Esophagus muscularis mucosa (tissue), 4 donors: ENCODE measurements at regions of chr4 and their contacts with region 1.

Region 1: DNA sequence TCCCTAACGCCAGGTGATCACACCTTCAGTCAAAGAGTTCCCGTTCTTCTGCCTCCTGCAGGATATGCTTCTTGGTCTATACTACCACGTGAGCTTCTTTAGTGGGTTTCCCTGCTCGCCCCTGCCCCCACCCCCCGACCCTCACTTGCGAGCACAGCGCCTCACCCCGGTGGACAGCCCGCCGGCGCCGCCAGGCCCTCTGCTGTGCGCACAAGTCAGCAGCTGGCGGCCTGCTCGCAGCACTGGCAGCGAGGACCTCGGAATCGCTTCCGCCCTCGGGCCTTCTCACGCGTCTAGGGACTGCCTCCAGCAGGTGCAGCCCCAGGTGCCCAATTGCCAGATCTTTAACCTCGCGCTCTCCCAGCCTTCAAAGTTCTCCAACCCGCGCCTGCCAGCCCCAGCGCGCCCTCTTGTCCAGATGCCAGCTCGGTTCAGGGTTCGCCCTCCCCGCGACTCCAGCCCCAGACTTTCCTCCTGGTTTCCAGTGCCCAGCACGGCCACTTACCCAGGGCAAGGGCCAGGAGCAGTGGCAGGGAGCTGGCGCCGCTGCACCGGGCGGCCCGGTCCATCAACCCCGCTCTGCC is 474 bp downstream of the BTC start:
- DNase-seq: no peak
- H3K4me3 ChIP-seq: peak overlapping the region; percentile 63 to 83 (median 69)
- H3K27ac ChIP-seq: peak overlapping the region; percentile 85 to 94 (median 90)
- H3K4me1 ChIP-seq: peaks cover 10 to 46% (median 35%) of the 10 kb centered on the region in 4 donors
- H3K27me3 ChIP-seq: no peaks in the 10 kb centered on the region
- CTCF ChIP-seq: peak; percentile 34 to 57 (median 47)
- EP300 ChIP-seq: no peak
- POLR2A ChIP-seq: no peak

Region 2: DNA sequence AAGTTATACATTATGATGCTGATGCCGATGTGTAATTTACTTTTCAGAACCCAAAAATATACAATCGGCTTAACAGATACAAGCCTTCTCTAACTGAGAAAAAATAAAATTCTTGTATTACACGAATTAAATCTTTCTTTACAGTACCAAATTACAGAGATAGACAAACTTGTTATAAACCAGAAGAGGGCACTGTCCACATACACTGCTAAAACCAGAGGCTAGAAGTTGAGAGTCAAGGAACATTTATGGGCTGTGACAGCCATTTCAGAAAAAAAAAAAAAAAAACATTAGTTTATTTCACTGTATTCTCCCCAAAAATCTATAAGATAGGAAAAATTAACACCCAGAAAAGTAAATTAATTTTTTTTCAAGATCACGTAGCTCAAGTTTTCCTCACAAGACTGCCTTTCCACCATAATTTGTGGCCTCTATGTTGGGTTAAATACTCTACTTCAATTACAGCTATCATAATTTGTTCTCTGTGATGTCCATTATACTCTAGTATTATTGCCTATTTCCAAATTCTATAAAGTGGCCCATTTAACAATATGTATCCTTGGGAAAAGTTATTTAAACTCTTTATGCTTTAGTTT is 416.9 kb before region 1 on chr4:
- intact Hi-C with region 1: loop called (anchors 5 kb)
- DNase-seq: no peak
- H3K4me3 ChIP-seq: no peak overlapping the region
- H3K27ac ChIP-seq: peak overlapping the region in 2 of 4 donors; percentile 38 to 41
- H3K4me1 ChIP-seq: peaks cover 0 to 32% (median 11%) of the 10 kb centered on the region in 4 donors
- H3K27me3 ChIP-seq: no peaks in the 10 kb centered on the region
- CTCF ChIP-seq: peak; percentile 55 to 62 (median 59)
- EP300 ChIP-seq: no peak
- POLR2A ChIP-seq: no peak

Region 3: GRCh38 chr4:74444891-74445642 is 348.8 kb before region 1 on chr4 and contains the start of gene AREG:
- intact Hi-C with region 1: loop called (anchors 10 kb)
- DNase-seq: peak; percentile 94
- H3K4me3 ChIP-seq: peak within 1 kb of the TSS; percentile 66 to 71 (median 70)
- H3K27ac ChIP-seq: peak within 1 kb of the TSS; percentile 85 to 89 (median 88)
- H3K4me1 ChIP-seq: peaks cover 0 to 20% (median 10%) of the 10 kb centered on the region in 4 donors
- H3K27me3 ChIP-seq: no peaks in the 10 kb centered on the region
- CTCF ChIP-seq: peak; percentile 53 to 65 (median 55)
- EP300 ChIP-seq: peak; percentile 67
- POLR2A ChIP-seq: no peak
- total RNA-seq, gene AREG: 1.4 to 18.6 (median 4.4) TPM